ENCODE measurements at regions of chr22 and their contacts with region 1.

Region 1: GRCh38 chr22:18905540-18906409 is at the start of gene DGCR6:
- DNase-seq: no peak
- H3K4me3 ChIP-seq: no peak within 1 kb of the TSS
- H3K27ac ChIP-seq: no peak within 1 kb of the TSS
- H3K4me1 ChIP-seq: no peaks in the 10 kb centered on the region
- H3K27me3 ChIP-seq: no peaks in the 10 kb centered on the region
- CTCF ChIP-seq: no peak
- EP300 ChIP-seq: no peak
- POLR2A ChIP-seq: no peak
- RAD21 ChIP-seq: no peak
- total RNA-seq, gene DGCR6: 0.82 and 0.96 TPM in 2 replicates

Region 2: DNA sequence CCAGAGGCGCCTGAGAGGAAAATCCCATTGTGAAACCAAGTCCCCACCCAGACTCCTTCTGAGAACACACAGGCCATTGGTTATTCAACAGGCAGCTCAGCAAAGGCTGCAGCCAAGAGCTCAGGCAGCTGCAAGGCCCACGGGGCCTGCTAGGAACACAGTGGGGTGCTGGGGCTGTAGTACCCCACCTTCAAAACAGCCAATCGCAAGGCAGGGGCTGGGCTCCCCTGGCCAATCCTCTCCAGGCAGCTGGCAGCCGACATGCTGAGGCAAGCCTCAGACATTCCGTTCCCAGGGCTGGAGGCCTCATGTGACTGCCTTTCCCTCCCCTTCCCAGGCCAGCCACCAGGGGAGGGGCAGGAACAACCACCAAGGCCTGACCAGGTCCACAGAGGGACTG is 23.7 kb after region 1 on chr22:
- CTCF ChIA-PET with region 1: interaction called, 11 read pairs
- POLR2A ChIA-PET with region 1: interaction called, 8 read pairs
- DNase-seq: no peak
- H3K4me3 ChIP-seq: no peak overlapping the region
- H3K27ac ChIP-seq: no peak overlapping the region
- H3K4me1 ChIP-seq: no peaks in the 10 kb centered on the region
- H3K27me3 ChIP-seq: no peaks in the 10 kb centered on the region
- CTCF ChIP-seq: no peak
- EP300 ChIP-seq: no peak
- POLR2A ChIP-seq: no peak
- RAD21 ChIP-seq: no peak

Region 3: GRCh38 chr22:18935889-18936529 is 30.2 kb after region 1 on chr22 and contains the start of gene PRODH:
- CTCF ChIA-PET with region 1: interaction called, 11 read pairs
- POLR2A ChIA-PET with region 1: interaction called, 22 read pairs
- DNase-seq: no peak
- H3K4me3 ChIP-seq: no peak within 1 kb of the TSS
- H3K27ac ChIP-seq: no peak within 1 kb of the TSS
- H3K4me1 ChIP-seq: no peaks in the 10 kb centered on the region
- H3K27me3 ChIP-seq: no peaks in the 10 kb centered on the region
- CTCF ChIP-seq: no peak
- EP300 ChIP-seq: no peak
- POLR2A ChIP-seq: no peak
- RAD21 ChIP-seq: no peak
- total RNA-seq, gene PRODH: 27.5 and 27.6 TPM in 2 replicates

Region 4: DNA sequence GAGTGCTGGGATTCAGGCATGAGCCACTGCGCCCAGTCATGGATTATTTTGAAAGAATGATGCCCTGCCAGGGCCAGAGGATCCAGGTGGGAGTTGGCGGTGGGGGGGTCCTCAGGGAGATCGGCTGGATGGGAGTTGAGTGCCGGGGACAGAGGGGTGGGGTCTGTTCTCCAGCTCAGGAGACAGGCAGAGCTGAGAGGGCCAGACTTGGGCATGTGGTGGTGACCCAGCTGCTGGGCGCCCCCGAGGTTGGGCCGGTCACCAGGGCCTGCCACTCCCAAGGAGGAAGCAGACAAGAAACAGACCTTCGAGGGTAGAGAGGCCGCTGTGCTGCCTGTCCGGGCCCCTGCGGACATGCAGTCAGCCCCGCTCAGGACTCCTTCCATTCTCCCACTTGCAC is 42.1 kb after region 1 on chr22:
- CTCF ChIA-PET with region 1: interaction called, 17 read pairs
- POLR2A ChIA-PET with region 1: interaction called, 10 read pairs
- DNase-seq: no peak
- H3K4me3 ChIP-seq: no peak overlapping the region
- H3K27ac ChIP-seq: peak overlapping the region; percentile 34; the same call in 1 of the 2 replicates
- H3K4me1 ChIP-seq: peaks cover 0 to 8% (median 7%) of the 10 kb centered on the region in 4 experiments; a peak in 5 of 7 replicates
- H3K27me3 ChIP-seq: no peaks in the 10 kb centered on the region
- CTCF ChIP-seq: no peak
- EP300 ChIP-seq: no peak
- POLR2A ChIP-seq: peak in 1 of 2 experiments; percentile 73; a peak in 1 of 3 replicates
- RAD21 ChIP-seq: no peak